ENCODE measurements at regions of chr18 and their contacts with region 1.

Region 1: DNA sequence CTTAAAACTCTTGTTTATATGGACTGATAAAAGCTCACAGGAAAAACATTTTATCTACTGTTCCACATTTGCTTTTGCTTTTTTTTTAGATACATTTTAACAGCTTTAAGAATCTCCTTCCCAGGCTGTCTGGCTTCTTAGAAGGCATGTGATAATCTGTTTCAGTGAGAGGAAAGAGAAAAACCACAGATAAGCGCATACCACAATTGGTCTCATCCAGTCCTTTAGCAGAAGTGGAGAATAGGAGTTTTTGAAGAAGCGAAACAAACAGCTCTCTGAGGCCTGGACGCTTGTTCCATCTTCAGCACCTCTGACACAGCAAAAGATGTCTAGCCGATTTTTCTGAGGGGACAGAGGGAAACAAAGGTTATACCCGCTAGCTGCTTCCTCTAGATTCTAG is 37.6 kb downstream of the RMC1 start:
- DNase-seq: peak in 2 of 4 experiments; percentile 61 to 75
- ATAC-seq: peak; percentile 88
- H3K4me3 ChIP-seq: no peak overlapping the region
- H3K27ac ChIP-seq: no peak overlapping the region; the same call in 2 of the 3 replicates
- H3K4me1 ChIP-seq: peaks cover 5 to 18% of the 10 kb centered on the region in 2 experiments
- H3K27me3 ChIP-seq: no peaks in the 10 kb centered on the region
- CTCF ChIP-seq: no peak
- EP300 ChIP-seq: peak; percentile 74
- POLR2A ChIP-seq: no peak
- RAD21 ChIP-seq: peak in 1 of 2 experiments; percentile 12; a peak in 2 of 4 replicates

Region 2: GRCh38 chr18:23529597-23529996 is 11.3 kb before region 1 on chr18:
- CTCF ChIA-PET with region 1: no interaction called
- POLR2A ChIA-PET with region 1: interaction called, 3 read pairs
- in situ Hi-C with region 1: no loop called
- intact Hi-C with region 1: loop called (anchors 1 kb)
- DNase-seq: peak; percentile 68 to 72 (median 72)
- ATAC-seq: peak; percentile 66
- H3K4me3 ChIP-seq: no peak overlapping the region
- H3K27ac ChIP-seq: peak overlapping the region; percentile 95; the same call in 2 of the 3 replicates
- H3K4me1 ChIP-seq: peaks cover 14 to 28% of the 10 kb centered on the region in 2 experiments
- H3K27me3 ChIP-seq: no peaks in the 10 kb centered on the region
- CTCF ChIP-seq: no peak
- EP300 ChIP-seq: no peak; the same call in 1 of the 2 replicates
- POLR2A ChIP-seq: no peak
- RAD21 ChIP-seq: no peak

Measured in K562 (cell line).